Right cardiac atrium (tissue), 5 donors: ENCODE measurements at regions of chr1 and their contacts with region 1.

Region 1: DNA sequence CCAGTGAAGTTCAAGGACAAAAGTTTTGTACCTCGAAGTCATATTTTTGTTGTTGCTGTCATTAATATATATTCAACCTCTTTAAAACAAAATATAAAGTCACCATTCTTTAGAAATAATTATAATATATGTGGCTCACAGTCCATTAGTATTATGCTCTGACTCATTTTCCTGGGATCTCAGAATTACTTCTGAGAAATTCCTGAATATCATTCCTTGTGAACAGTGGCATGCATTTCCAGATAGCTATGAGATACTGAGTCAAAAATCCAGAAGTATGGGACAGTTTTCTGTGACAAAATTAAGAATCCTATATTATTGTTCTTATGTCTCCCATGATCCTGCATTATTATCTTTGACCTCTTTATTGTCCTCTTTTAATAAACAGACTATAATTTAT is 13.8 kb upstream of the RGS21 start:
- DNase-seq: no peak
- ATAC-seq: no peak
- H3K4me3 ChIP-seq: no peak overlapping the region
- H3K27ac ChIP-seq: no peak overlapping the region
- H3K4me1 ChIP-seq: no peaks in the 10 kb centered on the region
- H3K27me3 ChIP-seq: no peaks in the 10 kb centered on the region

Region 2: DNA sequence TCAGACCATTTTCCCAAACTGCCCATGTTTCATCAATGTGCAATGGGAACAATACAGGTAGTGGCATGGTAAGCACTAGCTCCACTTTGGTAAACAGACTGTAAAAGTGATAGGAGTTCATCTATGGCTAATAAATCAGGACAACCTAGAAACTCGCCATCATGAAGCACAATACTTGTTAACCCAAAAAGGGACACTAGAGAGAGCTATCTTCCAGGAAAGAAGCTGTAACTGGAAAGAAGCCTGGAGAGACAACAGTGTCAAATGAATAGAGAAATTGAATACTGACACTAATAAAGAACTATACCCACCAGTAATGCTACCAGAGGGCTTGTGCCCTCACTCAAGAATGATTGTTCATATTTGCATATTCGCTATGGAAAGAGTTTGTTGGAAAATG is 309.5 kb before region 1 on chr1:
- intact Hi-C with region 1: loop called in 1 of 4 experiments (anchors 10 kb)
- DNase-seq: no peak
- ATAC-seq: no peak
- H3K4me3 ChIP-seq: no peak overlapping the region
- H3K27ac ChIP-seq: no peak overlapping the region
- H3K4me1 ChIP-seq: no peaks in the 10 kb centered on the region
- H3K27me3 ChIP-seq: no peaks in the 10 kb centered on the region